ENCODE measurements at regions of chr6 and their contacts with region 1.

Region 1: GRCh38 chr6:163159689-163160088 is 254.8 kb upstream of the QKI start:
- DNase-seq: no peak
- H3K4me3 Mint-ChIP-seq: no peak overlapping the region
- H3K27ac Mint-ChIP-seq: no peak overlapping the region
- H3K4me1 Mint-ChIP-seq: no peaks in the 10 kb centered on the region
- H3K27me3 Mint-ChIP-seq: no peaks in the 10 kb centered on the region

Region 2: GRCh38 chr6:163137398-163137881 is 22.2 kb before region 1 on chr6:
- CTCF ChIA-PET with region 1: no interaction called
- POLR2A ChIA-PET with region 1: no interaction called
- DNase-seq: no peak
- H3K4me3 Mint-ChIP-seq: no peak overlapping the region
- H3K27ac Mint-ChIP-seq: no peak overlapping the region
- H3K4me1 Mint-ChIP-seq: no peaks in the 10 kb centered on the region
- H3K27me3 Mint-ChIP-seq: no peaks in the 10 kb centered on the region

Region 3: GRCh38 chr6:163170294-163170883 is 10.7 kb after region 1 on chr6:
- CTCF ChIA-PET with region 1: interaction called, 11 read pairs
- POLR2A ChIA-PET with region 1: no interaction called
- DNase-seq: no peak
- H3K4me3 Mint-ChIP-seq: no peak overlapping the region
- H3K27ac Mint-ChIP-seq: no peak overlapping the region
- H3K4me1 Mint-ChIP-seq: no peaks in the 10 kb centered on the region
- H3K27me3 Mint-ChIP-seq: no peaks in the 10 kb centered on the region